ENCODE measurements at regions of chr11 and their contacts with region 1.

Region 1: DNA sequence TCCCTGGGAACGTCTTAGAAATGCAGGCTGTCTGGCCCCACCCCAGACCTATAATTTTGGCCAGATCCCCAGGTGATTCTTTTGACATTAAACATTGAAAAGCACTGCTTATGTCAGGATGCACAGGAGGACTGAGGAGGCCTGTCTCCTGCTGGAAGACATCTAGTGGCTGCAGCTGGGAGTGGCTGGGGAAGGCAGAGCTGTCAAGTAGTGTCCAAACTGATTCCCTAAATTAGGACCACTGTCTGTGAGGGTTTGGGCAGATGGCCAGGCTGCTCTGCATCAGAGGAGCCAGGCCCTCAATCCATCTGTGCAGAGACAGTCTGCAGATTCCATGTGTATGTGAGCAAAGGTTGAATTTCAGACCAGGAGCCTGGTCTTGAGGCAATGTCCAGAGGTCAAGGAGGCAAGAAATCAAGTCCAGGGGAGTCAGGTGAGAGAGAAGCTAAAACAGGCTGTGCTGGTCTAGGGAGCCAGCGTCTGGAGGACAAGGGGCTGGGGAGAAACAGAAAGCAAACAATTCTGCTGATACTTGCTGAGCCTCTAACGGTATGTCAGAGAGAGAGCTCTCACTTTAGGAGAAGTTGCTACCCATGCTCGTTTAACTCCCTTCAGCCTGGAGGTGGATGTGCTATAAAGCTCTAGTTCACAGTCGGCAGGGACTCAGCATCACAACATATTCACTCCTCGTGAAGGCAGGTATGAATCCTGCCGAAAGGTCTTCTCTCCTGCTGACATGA is 15.3 kb upstream of the SYTL2 start:
- DNase-seq: peak; percentile 46
- ATAC-seq: peak; percentile 61 to 70

Region 2: GRCh38 chr11:85595285-85595884 is 230.9 kb before region 1 on chr11:
- intact Hi-C with region 1: loop called in 1 of 2 experiments (anchors 2 kb)
- DNase-seq: no peak
- ATAC-seq: peak; percentile 53 to 59

Region 3: GRCh38 chr11:85627998-85628770 is 198.1 kb before region 1 on chr11 and contains the start of gene TMEM126B:
- intact Hi-C with region 1: no loop called
- DNase-seq: peak; percentile 99
- ATAC-seq: peak; percentile 99
- total RNA-seq, gene TMEM126B: 48.4 to 55.5 TPM

Region 4: DNA sequence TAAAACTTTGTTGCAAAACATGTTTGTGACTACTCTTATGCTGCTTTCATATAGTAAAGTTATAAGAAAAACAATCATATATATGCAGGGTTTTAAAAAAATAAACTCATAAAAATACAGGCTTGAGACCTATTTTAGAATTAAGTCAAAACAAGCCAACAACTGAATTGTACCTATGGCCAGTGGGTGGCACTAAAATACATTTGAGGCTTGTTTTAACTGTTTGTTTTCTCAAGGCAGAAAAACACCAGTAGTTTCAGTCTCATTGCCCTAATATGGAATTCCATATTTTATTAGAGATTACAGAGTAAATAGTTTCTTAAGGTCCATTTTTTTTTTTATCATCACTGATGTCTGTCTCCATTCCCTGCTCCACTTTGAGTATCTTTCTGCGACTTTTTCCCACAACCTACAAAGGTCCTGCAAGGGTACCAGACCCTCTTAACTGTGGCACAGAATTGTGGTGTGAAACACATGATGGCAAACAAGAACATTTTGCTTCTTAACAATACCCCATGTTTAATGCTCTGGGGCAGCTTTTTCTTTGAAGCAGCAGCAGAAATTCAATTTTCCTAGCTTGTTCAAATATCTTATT is 131.8 kb before region 1 on chr11:
- intact Hi-C with region 1: loop called (anchors 5 to 10 kb)
- DNase-seq: no peak
- ATAC-seq: no peak

Region 5: DNA sequence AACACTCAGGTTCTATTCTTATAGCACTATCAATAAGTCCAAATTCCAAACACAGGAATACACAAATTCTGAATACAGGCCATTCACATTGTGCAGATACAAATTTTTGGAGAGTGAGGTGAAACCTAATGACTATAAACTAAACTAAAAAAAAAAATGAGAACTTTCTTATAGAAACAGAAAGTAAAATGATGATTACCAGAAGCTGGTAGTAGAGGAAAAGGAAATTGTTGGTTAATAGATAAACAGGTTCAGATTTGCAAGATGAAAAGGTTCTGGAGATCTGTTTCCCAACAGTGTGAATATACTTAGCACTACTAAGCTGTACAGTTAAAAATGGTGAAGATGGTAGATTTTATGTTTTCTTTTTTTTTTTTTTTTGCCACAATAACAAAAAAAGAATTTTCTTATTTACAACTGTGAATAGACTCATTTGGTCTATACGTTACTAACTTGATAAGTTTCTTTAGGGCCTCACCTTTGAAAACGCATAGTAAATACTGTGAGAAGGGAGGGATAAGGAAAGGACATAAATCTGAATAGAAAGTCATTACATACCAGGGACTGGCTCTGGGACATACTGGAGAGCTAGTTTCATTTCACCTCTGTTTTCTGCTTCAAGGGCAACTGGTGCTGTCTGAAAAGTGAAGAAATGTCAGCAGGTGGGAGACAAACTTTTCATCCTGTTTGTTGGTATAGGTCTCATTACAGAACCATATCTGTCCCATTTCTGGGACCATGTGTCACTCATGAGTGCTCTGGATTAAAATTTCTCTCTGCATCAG is 126.1 kb before region 1 on chr11:
- intact Hi-C with region 1: loop called (anchors 5 to 10 kb)
- DNase-seq: no peak
- ATAC-seq: no peak